ENCODE measurements at regions of chr17 and their contacts with region 1.

Region 1: DNA sequence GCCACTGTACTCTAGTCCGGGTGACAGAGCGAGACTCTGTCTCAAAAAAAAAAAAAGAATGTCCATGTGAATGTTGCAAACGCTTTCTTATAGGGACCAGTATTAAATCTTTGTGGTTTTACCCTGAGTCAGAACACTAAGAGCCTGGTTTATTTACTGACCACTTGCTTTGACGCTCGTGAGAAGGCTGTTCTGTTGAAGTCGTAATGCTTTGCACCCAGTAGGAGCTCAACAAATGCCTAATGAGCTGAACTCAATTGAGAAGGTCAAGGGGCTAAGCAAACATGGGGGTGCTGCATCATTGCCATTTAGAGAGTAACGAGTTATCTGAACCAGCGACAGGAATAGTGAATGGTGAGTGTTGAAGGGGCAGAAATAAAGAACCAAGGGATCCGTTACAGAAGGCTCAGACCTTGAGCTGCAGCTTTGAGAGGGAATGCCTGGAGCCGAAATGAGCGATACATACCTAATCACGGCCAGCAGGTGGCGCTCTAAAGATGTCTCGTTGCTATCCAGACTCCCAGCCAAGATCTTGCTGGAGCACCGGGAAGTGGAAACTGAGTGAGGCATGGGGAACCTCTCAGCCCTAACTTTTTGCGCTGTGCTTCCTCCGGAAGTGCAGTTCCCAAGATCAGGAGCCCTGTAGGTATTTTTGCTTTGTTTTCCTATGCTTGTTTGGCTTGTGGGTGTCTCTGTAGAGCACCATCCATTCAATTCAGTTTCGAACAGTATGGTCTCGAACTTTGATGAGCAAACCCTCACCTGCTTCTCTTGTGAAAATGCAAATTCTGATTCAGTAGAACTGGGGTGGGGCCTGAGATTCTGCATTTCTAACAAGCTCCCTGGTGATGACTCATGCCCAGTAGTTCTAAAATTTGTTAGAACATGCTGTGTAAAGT is 12.6 kb upstream of the RNF222 start:
- DNase-seq: peak; percentile 78 to 83 (median 79)
- H3K4me3 ChIP-seq: peak overlapping the region in 2 of 7 experiments; percentile 31 to 57
- H3K27ac ChIP-seq: no peak overlapping the region
- H3K4me1 ChIP-seq: peaks cover 4 to 22% (median 16%) of the 10 kb centered on the region in 4 experiments
- H3K27me3 ChIP-seq: peaks cover 0 to 2% (median 0%) of the 10 kb centered on the region in 5 experiments

Region 2: DNA sequence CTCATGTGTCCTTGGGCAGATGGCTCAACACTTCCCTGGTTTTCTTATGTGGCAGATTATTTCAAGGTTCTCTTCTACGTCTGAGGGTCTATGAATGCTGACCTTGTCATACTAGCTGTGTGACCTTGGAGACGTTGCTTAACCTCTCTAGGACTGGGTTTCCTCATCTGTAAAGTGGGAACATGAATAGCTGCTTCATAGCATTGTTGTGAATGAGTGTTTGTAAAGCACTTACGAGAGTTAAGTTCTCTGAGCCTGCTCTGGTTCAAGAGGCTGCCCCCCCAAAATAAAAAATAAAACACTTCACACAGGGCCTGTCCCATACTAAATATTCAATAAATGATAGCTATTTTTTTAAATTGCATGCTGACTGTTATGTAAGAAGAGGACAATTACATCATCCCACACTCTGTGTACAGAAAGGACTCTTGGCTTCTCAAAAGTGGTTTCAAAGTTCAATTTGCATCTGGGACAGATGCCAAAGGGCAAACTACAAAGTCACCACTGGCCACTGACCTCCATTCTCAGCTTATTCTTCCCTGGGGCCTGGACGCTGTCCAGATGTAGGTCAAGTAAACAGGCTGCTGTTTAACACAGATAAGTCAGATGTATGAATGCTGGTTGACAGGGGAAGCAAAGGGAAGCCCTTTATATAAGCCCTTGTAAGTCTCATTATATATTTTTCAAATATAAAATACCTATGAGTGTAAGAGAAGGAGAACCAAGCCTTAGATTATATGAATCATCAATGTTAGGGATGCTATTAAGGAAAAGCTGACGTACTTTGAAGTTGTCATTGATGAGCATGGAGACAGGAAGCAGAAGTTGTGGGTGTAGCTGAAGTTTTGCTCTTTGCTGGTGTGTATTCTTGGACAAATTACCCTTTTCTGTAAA is 10.1 kb after region 1 on chr17:
- CTCF ChIA-PET with region 1: interaction called, 12 read pairs
- POLR2A ChIA-PET with region 1: no interaction called
- DNase-seq: peak; percentile 27 to 62 (median 59)
- H3K4me3 ChIP-seq: no peak overlapping the region
- H3K27ac ChIP-seq: peak overlapping the region in 1 of 2 experiments; percentile 9
- H3K4me1 ChIP-seq: peaks cover 0 to 10% (median 2%) of the 10 kb centered on the region in 4 experiments
- H3K27me3 ChIP-seq: peaks cover 0 to 4% (median 0%) of the 10 kb centered on the region in 5 experiments

Region 3: GRCh38 chr17:8438441-8438840 is 28.2 kb after region 1 on chr17:
- CTCF ChIA-PET with region 1: interaction called, 10 read pairs
- POLR2A ChIA-PET with region 1: interaction called, 4 read pairs
- DNase-seq: no peak
- H3K4me3 ChIP-seq: no peak overlapping the region
- H3K27ac ChIP-seq: no peak overlapping the region
- H3K4me1 ChIP-seq: peaks cover 12 to 31% (median 20%) of the 10 kb centered on the region in 4 experiments
- H3K27me3 ChIP-seq: no peaks in the 10 kb centered on the region